ENCODE measurements at regions of chr3 and their contacts with region 1.

Region 1: DNA sequence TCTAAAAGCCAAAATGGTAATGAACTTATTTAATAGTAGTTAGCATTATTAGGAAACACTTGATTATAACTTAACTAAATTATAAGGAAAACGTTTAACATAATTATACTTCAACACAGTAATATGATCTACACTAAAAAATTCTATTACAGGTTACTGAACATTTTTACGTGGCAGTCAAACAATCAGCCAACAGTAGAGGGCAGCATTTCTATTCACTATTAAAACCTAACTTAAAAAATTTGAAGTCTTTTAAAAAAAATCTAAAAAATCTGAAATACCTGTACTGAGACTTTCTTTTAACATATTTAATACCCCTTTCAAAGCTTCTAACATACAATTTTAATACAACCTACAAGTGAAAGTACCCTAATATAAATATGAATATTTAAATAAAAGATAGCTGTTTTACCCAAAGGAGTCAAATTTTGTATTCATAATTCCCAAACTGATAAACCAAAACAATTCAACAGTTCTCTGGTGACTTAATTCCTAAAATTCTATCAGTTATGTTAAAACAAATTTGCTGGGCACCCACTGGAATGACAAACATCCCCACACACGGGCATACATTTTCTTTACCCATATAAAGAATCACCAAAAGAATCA is 41.5 kb downstream of the DLG1 start:
- H3K4me3 ChIP-seq: no peak overlapping the region
- H3K27ac ChIP-seq: no peak overlapping the region
- H3K4me1 ChIP-seq: no peaks in the 10 kb centered on the region
- CTCF ChIP-seq: no peak

Region 2: GRCh38 chr3:196889844-196890708 is 366.9 kb before region 1 on chr3:
- CTCF ChIA-PET with region 1: no interaction called
- POLR2A ChIA-PET with region 1: no interaction called
- H3K4me3 ChIP-seq: no peak overlapping the region
- H3K27ac ChIP-seq: no peak overlapping the region
- H3K4me1 ChIP-seq: no peaks in the 10 kb centered on the region
- CTCF ChIP-seq: no peak

Region 3: GRCh38 chr3:197224034-197224444 is 32.9 kb before region 1 on chr3:
- CTCF ChIA-PET with region 1: interaction called, 14 read pairs
- POLR2A ChIA-PET with region 1: no interaction called
- H3K4me3 ChIP-seq: no peak overlapping the region
- H3K27ac ChIP-seq: no peak overlapping the region
- H3K4me1 ChIP-seq: no peaks in the 10 kb centered on the region; the same call in 1 of the 2 replicates
- CTCF ChIP-seq: no peak; the same call in 1 of the 2 replicates

Region 4: DNA sequence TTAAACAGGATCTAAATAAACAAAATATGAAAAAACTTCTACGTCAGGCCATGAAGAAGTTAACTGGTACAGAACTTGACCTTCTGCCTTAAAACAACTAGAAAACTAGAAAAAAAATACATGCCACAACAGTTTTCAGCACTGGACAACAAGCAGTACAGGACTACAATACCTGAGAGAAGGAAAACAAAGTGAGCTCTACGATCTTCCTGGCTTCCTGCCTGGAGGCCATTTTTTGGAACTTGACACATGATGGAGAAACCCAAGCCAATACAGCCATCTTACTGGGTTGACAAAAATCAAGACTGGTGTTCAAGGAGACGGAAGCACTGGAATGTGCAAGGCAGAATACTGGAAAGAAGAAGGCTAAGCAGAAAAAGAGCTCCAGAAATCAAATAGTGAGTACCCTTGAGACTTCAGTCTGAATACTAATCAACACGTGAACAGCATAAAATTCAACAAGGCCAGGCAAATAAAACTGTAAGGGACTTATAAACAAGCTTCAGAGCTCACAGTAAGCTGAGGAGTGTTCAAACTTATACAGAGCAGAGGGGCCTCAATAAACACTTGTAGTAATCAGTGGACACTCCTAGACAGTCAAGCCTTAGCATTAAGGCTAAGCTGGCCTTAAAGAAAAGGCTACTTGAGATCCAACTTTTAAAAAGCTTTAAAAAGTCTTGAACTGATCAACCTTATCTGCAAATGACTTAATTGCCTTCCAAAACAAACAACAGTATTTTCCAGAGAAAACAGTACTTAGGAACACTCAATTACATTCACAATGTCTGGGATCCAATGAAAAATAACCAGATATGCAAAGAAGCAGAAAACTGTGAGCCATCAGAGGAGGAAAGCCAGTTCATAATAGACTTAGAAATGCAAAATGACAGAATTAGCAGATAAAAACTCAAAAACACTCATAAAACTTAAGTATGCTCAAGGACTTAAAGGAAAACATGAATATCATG is 21.7 kb before region 1 on chr3:
- CTCF ChIA-PET with region 1: interaction called, 10 read pairs
- POLR2A ChIA-PET with region 1: no interaction called
- H3K4me3 ChIP-seq: no peak overlapping the region
- H3K27ac ChIP-seq: no peak overlapping the region
- H3K4me1 ChIP-seq: no peaks in the 10 kb centered on the region
- CTCF ChIP-seq: no peak

Region 5: GRCh38 chr3:197268294-197268693 is 11.4 kb after region 1 on chr3:
- CTCF ChIA-PET with region 1: interaction called, 40 read pairs
- POLR2A ChIA-PET with region 1: no interaction called
- H3K4me3 ChIP-seq: no peak overlapping the region
- H3K27ac ChIP-seq: no peak overlapping the region
- H3K4me1 ChIP-seq: no peaks in the 10 kb centered on the region; the same call in 1 of the 2 replicates
- CTCF ChIP-seq: no peak

Region 6: GRCh38 chr3:197501879-197502620 is 245.1 kb after region 1 on chr3:
- CTCF ChIA-PET with region 1: interaction called, 17 read pairs
- POLR2A ChIA-PET with region 1: no interaction called
- H3K4me3 ChIP-seq: no peak overlapping the region
- H3K27ac ChIP-seq: no peak overlapping the region
- H3K4me1 ChIP-seq: no peaks in the 10 kb centered on the region
- CTCF ChIP-seq: no peak

Region 7: GRCh38 chr3:197511130-197511529 is 254.2 kb after region 1 on chr3:
- CTCF ChIA-PET with region 1: interaction called, 21 read pairs
- POLR2A ChIA-PET with region 1: no interaction called
- H3K4me3 ChIP-seq: no peak overlapping the region
- H3K27ac ChIP-seq: no peak overlapping the region
- H3K4me1 ChIP-seq: no peaks in the 10 kb centered on the region
- CTCF ChIP-seq: no peak

Measured in HEK293 (cell line).